ENCODE measurements at regions of chr5 and their contacts with region 1.

Region 1: DNA sequence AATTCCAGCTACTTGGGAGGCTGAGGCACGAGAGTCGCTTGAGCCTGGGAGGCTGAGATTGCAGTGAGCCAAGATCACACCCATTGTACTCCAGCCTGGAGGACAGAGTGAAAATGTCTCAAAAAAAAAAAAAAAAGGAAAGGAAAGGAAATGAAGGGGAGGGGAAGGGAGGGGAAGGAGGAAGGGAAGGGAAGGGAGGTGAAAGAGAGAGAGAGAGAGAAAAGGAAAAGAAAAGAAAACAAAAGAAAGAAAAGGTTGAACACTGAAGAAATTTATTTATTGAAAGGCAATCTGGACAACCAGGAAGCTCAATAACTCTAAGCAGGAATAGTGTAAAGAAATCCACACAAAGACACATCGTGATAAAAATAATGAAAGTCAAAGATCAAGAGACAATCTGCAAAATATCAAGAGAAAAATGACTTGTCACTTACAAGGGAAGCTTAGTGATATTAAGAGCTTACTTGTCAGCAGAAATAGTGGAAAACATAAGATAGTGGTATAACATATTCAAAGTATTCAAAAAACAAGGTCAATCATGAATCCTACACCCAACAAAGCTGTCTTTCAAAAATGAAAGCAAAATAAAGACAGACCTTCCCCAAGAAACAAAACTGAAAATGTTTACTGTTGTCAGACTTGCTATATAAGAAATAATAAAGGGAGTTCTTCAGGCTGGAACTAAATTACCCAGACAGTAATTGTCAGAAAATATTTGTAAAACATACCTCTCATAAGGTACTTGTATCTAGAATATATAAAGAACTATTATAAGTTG is 10.9 kb upstream of the RIMOC1 start:
- DNase-seq: no peak
- ATAC-seq: no peak
- H3K4me3 ChIP-seq: no peak overlapping the region
- H3K4me3 Mint-ChIP-seq: no peak overlapping the region
- H3K27ac ChIP-seq: no peak overlapping the region
- H3K27ac Mint-ChIP-seq: no peak overlapping the region
- H3K4me1 ChIP-seq: no peaks in the 10 kb centered on the region
- H3K4me1 Mint-ChIP-seq: peaks cover 2% of the 10 kb centered on the region
- H3K27me3 ChIP-seq: no peaks in the 10 kb centered on the region
- H3K27me3 Mint-ChIP-seq: peaks cover 20% of the 10 kb centered on the region
- CTCF ChIP-seq: no peak

Region 2: DNA sequence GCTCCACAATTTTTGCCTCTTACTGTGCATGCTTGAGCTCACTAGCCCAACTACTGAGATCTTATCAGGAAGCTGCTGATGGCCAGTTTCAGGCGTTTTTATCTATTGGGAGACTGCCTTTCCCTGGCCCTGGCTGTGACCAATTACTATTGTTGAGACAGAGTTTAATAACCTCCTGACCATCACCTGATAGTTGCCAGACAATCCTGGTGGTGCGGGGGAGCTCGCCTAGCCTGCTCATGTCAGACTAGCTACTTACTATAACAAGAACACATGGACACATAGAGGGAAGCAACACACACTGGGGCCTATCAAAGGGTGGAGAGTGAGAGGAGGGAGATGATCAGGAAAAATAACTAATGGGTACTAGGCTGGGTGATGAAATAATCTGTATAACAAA is 10.0 kb before region 1 on chr5:
- CTCF ChIA-PET with region 1: no interaction called
- POLR2A ChIA-PET with region 1: no interaction called
- intact Hi-C with region 1: loop called in 1 of 2 experiments (anchors 2 kb)
- DNase-seq: no peak
- ATAC-seq: no peak
- H3K4me3 ChIP-seq: no peak overlapping the region
- H3K4me3 Mint-ChIP-seq: no peak overlapping the region
- H3K27ac ChIP-seq: no peak overlapping the region
- H3K27ac Mint-ChIP-seq: no peak overlapping the region
- H3K4me1 ChIP-seq: no peaks in the 10 kb centered on the region
- H3K4me1 Mint-ChIP-seq: no peaks in the 10 kb centered on the region
- H3K27me3 ChIP-seq: peaks cover 0 to 2% of the 10 kb centered on the region in 2 experiments
- H3K27me3 Mint-ChIP-seq: peaks cover 13% of the 10 kb centered on the region
- CTCF ChIP-seq: no peak

Region 3: GRCh38 chr5:41935544-41935943 is 42.3 kb after region 1 on chr5:
- CTCF ChIA-PET with region 1: no interaction called
- POLR2A ChIA-PET with region 1: no interaction called
- intact Hi-C with region 1: loop called in 1 of 2 experiments (anchors 5 kb)
- DNase-seq: no peak
- ATAC-seq: no peak
- H3K4me3 ChIP-seq: no peak overlapping the region
- H3K4me3 Mint-ChIP-seq: no peak overlapping the region
- H3K27ac ChIP-seq: no peak overlapping the region
- H3K27ac Mint-ChIP-seq: no peak overlapping the region
- H3K4me1 ChIP-seq: no peaks in the 10 kb centered on the region
- H3K4me1 Mint-ChIP-seq: no peaks in the 10 kb centered on the region
- H3K27me3 ChIP-seq: no peaks in the 10 kb centered on the region
- H3K27me3 Mint-ChIP-seq: no peaks in the 10 kb centered on the region
- CTCF ChIP-seq: no peak

Measured in CD8-positive, alpha-beta T cell (primary cell).